Panc1 (cell line): ENCODE measurements at regions of chrX and their contacts with region 1.

Region 1: GRCh38 chrX:150202641-150203247 is 160.4 kb upstream of the MAMLD1 start:
- DNase-seq: no peak
- ATAC-seq: no peak
- H3K4me3 ChIP-seq: no peak overlapping the region
- H3K27ac ChIP-seq: no peak overlapping the region
- H3K4me1 ChIP-seq: peaks cover 7% of the 10 kb centered on the region
- H3K27me3 ChIP-seq: no peaks in the 10 kb centered on the region
- CTCF ChIP-seq: no peak

Region 2: DNA sequence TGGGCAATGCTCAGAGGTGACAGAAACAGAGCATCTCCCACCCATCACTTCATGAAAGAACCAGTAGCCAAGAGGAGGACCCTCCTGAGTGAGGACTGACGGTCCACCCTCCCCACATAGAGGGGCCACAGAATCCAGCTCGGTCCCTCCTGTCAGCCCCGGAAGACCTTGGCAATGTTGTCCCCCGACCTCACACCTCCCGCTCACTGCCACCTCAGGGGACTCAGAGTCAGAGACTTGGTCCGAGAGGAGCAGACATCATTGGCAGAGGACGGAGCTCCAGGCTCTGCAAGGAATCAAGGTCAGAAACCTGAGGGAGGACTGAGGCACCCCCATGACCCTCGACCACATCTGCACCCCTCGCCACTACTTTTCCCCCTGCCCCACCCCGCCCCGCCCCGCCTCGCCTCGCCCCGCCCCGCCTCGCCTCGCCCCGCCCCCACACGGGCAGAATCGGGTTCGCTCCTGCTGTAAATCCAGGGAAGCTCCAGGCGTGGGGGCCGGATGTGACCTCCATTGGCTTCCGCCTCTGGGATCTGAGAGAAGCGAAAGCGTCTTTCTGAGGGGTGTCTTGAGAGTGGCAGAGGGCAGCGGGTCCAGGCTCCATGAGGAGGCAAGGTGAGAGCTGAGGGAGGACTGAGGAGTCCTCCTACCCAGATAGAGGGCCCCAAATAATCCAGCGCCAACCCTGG is 491.1 kb before region 1 on chrX and contains the start of gene MAGEA11:
- CTCF ChIA-PET with region 1: no interaction called
- POLR2A ChIA-PET with region 1: no interaction called
- in situ Hi-C with region 1: no loop called
- intact Hi-C with region 1: no loop called
- DNase-seq: no peak
- ATAC-seq: no peak
- H3K4me3 ChIP-seq: no peak within 1 kb of the TSS
- H3K27ac ChIP-seq: no peak within 1 kb of the TSS
- H3K4me1 ChIP-seq: no peaks in the 10 kb centered on the region
- H3K27me3 ChIP-seq: 0 out of 2 replicates have a peak, but pooled peaks cover 2% of the 10 kb centered on the region
- CTCF ChIP-seq: no peak
- total RNA-seq, gene MAGEA11: not detected

Region 3: GRCh38 chrX:150094996-150095395 is 107.7 kb before region 1 on chrX:
- CTCF ChIA-PET with region 1: no interaction called
- POLR2A ChIA-PET with region 1: no interaction called
- in situ Hi-C with region 1: no loop called
- intact Hi-C with region 1: no loop called
- DNase-seq: no peak
- ATAC-seq: no peak
- H3K4me3 ChIP-seq: no peak overlapping the region
- H3K27ac ChIP-seq: no peak overlapping the region
- H3K4me1 ChIP-seq: no peaks in the 10 kb centered on the region
- H3K27me3 ChIP-seq: no peaks in the 10 kb centered on the region
- CTCF ChIP-seq: no peak

Region 4: DNA sequence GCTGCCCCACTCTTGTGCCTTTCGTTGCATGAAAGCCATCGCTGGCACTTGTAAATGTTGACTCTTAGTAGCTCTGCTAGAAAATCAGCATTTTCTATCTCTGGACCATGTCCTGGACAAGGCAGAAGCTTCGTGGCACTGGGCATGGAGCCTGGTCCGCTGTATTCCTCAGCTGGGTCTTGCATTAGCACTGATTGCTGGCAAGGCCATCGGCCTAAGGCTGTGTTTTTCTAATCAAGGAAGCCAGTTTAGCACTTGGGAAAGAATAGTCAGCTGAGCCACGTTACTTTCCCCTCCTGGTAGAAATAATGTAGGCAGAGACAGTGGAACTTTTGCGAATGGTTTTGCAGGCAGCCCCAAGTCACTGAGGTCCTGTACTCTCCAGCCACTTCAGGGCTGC is 84.3 kb before region 1 on chrX:
- CTCF ChIA-PET with region 1: interaction called, 11 read pairs
- POLR2A ChIA-PET with region 1: no interaction called
- in situ Hi-C with region 1: no loop called
- intact Hi-C with region 1: no loop called
- DNase-seq: no peak
- ATAC-seq: no peak
- H3K4me3 ChIP-seq: no peak overlapping the region
- H3K27ac ChIP-seq: no peak overlapping the region
- H3K4me1 ChIP-seq: no peaks in the 10 kb centered on the region
- H3K27me3 ChIP-seq: no peaks in the 10 kb centered on the region
- CTCF ChIP-seq: no peak